B cell (primary cell): ENCODE measurements at regions of chr5 and their contacts with region 1.

Region 1: GRCh38 chr5:139293504-139294373 is at the start of gene MATR3:
- DNase-seq: peak; percentile 96
- ATAC-seq: peak; percentile 87
- H3K4me3 ChIP-seq: peak within 1 kb of the TSS; percentile 81 to 97 (median 87)
- H3K4me3 Mint-ChIP-seq: peak within 1 kb of the TSS; percentile 98
- H3K27ac ChIP-seq: peak within 1 kb of the TSS; percentile 94 to 99
- H3K27ac Mint-ChIP-seq: peak within 1 kb of the TSS; percentile 99
- H3K4me1 ChIP-seq: peaks cover 35 to 39% of the 10 kb centered on the region in 2 donors
- H3K4me1 Mint-ChIP-seq: peaks cover 44% of the 10 kb centered on the region
- H3K27me3 ChIP-seq: no peaks in the 10 kb centered on the region
- H3K27me3 Mint-ChIP-seq: no peaks in the 10 kb centered on the region
- CTCF ChIP-seq: no peak
- total RNA-seq, gene MATR3: 243 and 271 TPM in 2 replicates

Region 2: GRCh38 chr5:139304391-139305324 is 10.9 kb after region 1 on chr5:
- CTCF ChIA-PET with region 1: interaction called, 3 read pairs
- POLR2A ChIA-PET with region 1: interaction called, 4 read pairs
- intact Hi-C with region 1: loop called (anchors 1 kb)
- DNase-seq: no peak
- ATAC-seq: no peak
- H3K4me3 ChIP-seq: no peak overlapping the region
- H3K4me3 Mint-ChIP-seq: peak overlapping the region; percentile 16
- H3K27ac ChIP-seq: peak overlapping the region in 1 of 2 donors; percentile 49
- H3K27ac Mint-ChIP-seq: peak overlapping the region; percentile 24
- H3K4me1 ChIP-seq: peaks cover 55 to 80% of the 10 kb centered on the region in 2 donors
- H3K4me1 Mint-ChIP-seq: peaks cover 78% of the 10 kb centered on the region
- H3K27me3 ChIP-seq: no peaks in the 10 kb centered on the region
- H3K27me3 Mint-ChIP-seq: no peaks in the 10 kb centered on the region
- CTCF ChIP-seq: no peak

Region 3: DNA sequence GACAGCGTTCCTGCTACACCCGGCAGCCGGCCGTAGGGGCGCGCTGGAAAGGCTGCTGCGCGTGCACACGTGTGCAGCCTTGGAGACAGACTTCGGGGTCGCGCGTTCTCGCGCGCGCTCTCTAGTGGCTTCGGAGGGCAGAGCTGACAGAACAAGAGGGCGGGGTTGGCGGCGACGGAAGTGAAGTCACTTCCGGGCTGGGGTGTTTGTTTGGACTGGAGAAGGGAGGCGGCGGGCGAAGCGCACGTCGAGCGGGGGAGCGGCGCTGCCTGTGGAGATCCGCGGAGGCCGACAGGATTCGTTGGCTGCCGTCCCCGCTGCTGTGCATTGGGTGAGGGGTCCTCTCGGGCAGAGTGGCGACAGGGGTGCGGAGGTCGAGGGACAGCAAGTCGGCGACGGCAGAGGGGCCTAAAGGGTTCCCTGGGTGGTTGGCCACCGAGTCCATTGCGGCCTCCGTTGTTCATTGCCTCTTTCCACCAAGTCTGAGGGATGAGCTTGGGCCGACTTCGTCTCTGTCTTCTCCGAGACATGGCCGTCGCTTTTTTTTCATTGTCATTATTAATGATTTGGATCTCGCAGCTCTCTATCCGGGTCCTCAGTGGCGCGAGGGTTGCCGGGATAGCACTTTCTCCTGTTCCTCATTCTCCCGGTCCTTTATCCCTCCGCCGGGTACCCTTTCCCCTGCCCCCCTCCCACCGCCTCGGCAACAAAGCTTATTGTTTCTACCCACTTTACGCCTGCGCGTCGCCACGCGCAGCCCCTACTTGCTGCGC is 48.1 kb after region 1 on chr5 and contains the start of gene PAIP2:
- CTCF ChIA-PET with region 1: interaction called, 12 read pairs
- POLR2A ChIA-PET with region 1: interaction called, 24 read pairs
- intact Hi-C with region 1: loop called (anchors 1 kb)
- DNase-seq: peak; percentile 98
- ATAC-seq: peak; percentile 89
- H3K4me3 ChIP-seq: peak within 1 kb of the TSS; percentile 63 to 99 (median 98)
- H3K4me3 Mint-ChIP-seq: peak within 1 kb of the TSS; percentile 100
- H3K27ac ChIP-seq: peak within 1 kb of the TSS; percentile 91 to 96
- H3K27ac Mint-ChIP-seq: peak within 1 kb of the TSS; percentile 100
- H3K4me1 ChIP-seq: peaks cover 29 to 31% of the 10 kb centered on the region in 2 donors
- H3K4me1 Mint-ChIP-seq: peaks cover 48% of the 10 kb centered on the region
- H3K27me3 ChIP-seq: no peaks in the 10 kb centered on the region
- H3K27me3 Mint-ChIP-seq: no peaks in the 10 kb centered on the region
- CTCF ChIP-seq: peak; percentile 72
- total RNA-seq, gene PAIP2: 109 and 121 TPM in 2 replicates

Region 4: GRCh38 chr5:139403787-139404483 is 110.2 kb after region 1 on chr5 and contains the start of gene SPATA24:
- CTCF ChIA-PET with region 1: interaction called, 6 read pairs
- POLR2A ChIA-PET with region 1: interaction called, 6 read pairs
- intact Hi-C with region 1: loop called (anchors 1 kb)
- DNase-seq: peak; percentile 99
- ATAC-seq: peak; percentile 85
- H3K4me3 ChIP-seq: peak within 1 kb of the TSS; percentile 50 to 73 (median 68)
- H3K4me3 Mint-ChIP-seq: peak within 1 kb of the TSS; percentile 95
- H3K27ac ChIP-seq: peak within 1 kb of the TSS; percentile 85 to 86
- H3K27ac Mint-ChIP-seq: peak within 1 kb of the TSS; percentile 97
- H3K4me1 ChIP-seq: peaks cover 33 to 43% of the 10 kb centered on the region in 2 donors
- H3K4me1 Mint-ChIP-seq: peaks cover 43% of the 10 kb centered on the region
- H3K27me3 ChIP-seq: no peaks in the 10 kb centered on the region
- H3K27me3 Mint-ChIP-seq: no peaks in the 10 kb centered on the region
- CTCF ChIP-seq: no peak
- total RNA-seq, gene SPATA24: 6.4 and 8.2 TPM in 2 replicates

Region 5: GRCh38 chr5:139517683-139518564 is 224.2 kb after region 1 on chr5:
- CTCF ChIA-PET with region 1: interaction called, 15 read pairs
- POLR2A ChIA-PET with region 1: no interaction called
- intact Hi-C with region 1: loop called (anchors 1 kb)
- DNase-seq: peak; percentile 92
- ATAC-seq: peak; percentile 96
- H3K4me3 ChIP-seq: peak overlapping the region; percentile 41 to 68 (median 61)
- H3K4me3 Mint-ChIP-seq: peak overlapping the region; percentile 87
- H3K27ac ChIP-seq: peak overlapping the region; percentile 71 to 79
- H3K27ac Mint-ChIP-seq: peak overlapping the region; percentile 86
- H3K4me1 ChIP-seq: peaks cover 2 to 20% of the 10 kb centered on the region in 2 donors
- H3K4me1 Mint-ChIP-seq: peaks cover 23% of the 10 kb centered on the region
- H3K27me3 ChIP-seq: no peaks in the 10 kb centered on the region
- H3K27me3 Mint-ChIP-seq: no peaks in the 10 kb centered on the region
- CTCF ChIP-seq: peak; percentile 92

Region 6: GRCh38 chr5:140639148-140639979 is 1345.6 kb after region 1 on chr5 and contains the start of gene TMCO6:
- CTCF ChIA-PET with region 1: no interaction called
- POLR2A ChIA-PET with region 1: interaction called, 11 read pairs
- intact Hi-C with region 1: no loop called
- DNase-seq: peak; percentile 95
- ATAC-seq: peak; percentile 99
- H3K4me3 ChIP-seq: peak within 1 kb of the TSS; percentile 65 to 92 (median 89)
- H3K4me3 Mint-ChIP-seq: peak within 1 kb of the TSS; percentile 91
- H3K27ac ChIP-seq: peak within 1 kb of the TSS; percentile 66 to 89
- H3K27ac Mint-ChIP-seq: peak within 1 kb of the TSS; percentile 92
- H3K4me1 ChIP-seq: peaks cover 5 to 14% of the 10 kb centered on the region in 2 donors
- H3K4me1 Mint-ChIP-seq: peaks cover 24% of the 10 kb centered on the region
- H3K27me3 ChIP-seq: no peaks in the 10 kb centered on the region
- H3K27me3 Mint-ChIP-seq: no peaks in the 10 kb centered on the region
- CTCF ChIP-seq: peak; percentile 77
- total RNA-seq, gene TMCO6: 33.3 and 36.2 TPM in 2 replicates